Activated CD8-positive, alpha-beta memory T cell treated with anti-CD3 and anti-CD28 coated beads, Interleukin-2, amount 10 ng/mL, durations not matched to agents 7 days and 5 days (primary cell): ENCODE measurements at regions of chr12 and their contacts with region 1.

Region 1: DNA sequence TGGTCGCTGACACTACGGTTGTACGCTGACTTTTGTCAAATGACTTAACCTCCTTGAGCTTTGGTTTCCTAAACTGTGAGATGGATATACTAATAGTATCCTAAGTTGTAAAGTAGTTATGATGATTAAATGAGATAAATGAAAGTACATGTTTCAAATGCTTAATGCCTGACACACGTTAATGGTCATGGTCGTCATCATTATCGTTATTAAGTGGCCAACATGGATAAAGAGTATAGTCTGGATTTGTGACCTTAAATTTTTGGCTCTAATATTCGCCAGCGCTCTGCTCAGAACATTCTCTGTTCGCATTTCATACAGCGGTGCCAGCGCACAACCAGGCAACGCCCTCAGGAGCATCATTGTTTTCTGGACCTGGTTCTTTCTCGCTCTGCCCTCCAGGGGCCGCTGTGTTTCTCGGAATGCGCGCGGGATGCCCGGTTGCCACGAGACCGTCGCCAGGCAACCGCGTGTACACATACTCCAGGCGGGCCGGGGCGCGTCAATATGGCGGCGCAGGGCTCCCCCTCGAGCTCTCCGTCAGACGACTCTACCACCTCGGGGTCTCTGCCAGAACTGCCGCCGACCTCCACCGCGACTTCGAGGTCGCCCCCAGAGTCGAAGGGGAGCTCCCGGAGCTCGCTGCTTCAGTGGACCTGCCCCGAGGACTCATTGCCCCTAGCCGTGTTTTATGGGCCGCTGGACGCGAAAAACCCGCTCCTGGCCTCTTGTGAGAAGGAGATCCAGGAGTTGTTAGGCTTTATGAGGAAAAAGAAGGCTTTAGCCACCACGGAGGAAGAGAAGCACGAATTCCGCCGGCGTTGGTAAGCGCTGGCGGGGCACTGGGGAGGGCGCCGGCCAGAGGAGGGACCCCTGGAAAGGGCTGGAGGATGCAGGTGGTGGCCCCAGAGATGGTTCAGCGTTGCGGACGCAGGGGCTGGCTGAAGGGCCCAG is at the start of gene CFAP54:
- DNase-seq: peak; percentile 96
- ATAC-seq: peak; percentile 87
- H3K4me3 Mint-ChIP-seq: peak within 1 kb of the TSS; percentile 84
- H3K27ac Mint-ChIP-seq: peak within 1 kb of the TSS; percentile 77
- H3K4me1 Mint-ChIP-seq: peaks cover 35% of the 10 kb centered on the region
- H3K27me3 Mint-ChIP-seq: peaks cover 20% of the 10 kb centered on the region
- total RNA-seq, gene CFAP54: 0.33 to 1.4 TPM

Region 2: GRCh38 chr12:96434107-96434506 is 55.3 kb before region 1 on chr12:
- CTCF ChIA-PET with region 1: interaction called, 14 read pairs
- DNase-seq: peak; percentile 93
- ATAC-seq: peak; percentile 97
- H3K4me3 Mint-ChIP-seq: peak overlapping the region; percentile 37
- H3K27ac Mint-ChIP-seq: peak overlapping the region; percentile 81
- H3K4me1 Mint-ChIP-seq: peaks cover 21% of the 10 kb centered on the region
- H3K27me3 Mint-ChIP-seq: no peaks in the 10 kb centered on the region

Region 3: GRCh38 chr12:96501139-96501761 is 11.9 kb after region 1 on chr12:
- CTCF ChIA-PET with region 1: interaction called, 38 read pairs
- DNase-seq: peak; percentile 77
- ATAC-seq: peak; percentile 87
- H3K4me3 Mint-ChIP-seq: no peak overlapping the region
- H3K27ac Mint-ChIP-seq: peak overlapping the region; percentile 96
- H3K4me1 Mint-ChIP-seq: peaks cover 53% of the 10 kb centered on the region
- H3K27me3 Mint-ChIP-seq: no peaks in the 10 kb centered on the region